ENCODE measurements at regions of chr16 and their contacts with region 1.

Region 1: GRCh38 chr16:17467923-17468540 is 2.7 kb downstream of the XYLT1 start:
- DNase-seq: peak; percentile 69
- ATAC-seq: peak; percentile 27; the same call in 1 of the 2 replicates
- H3K4me3 ChIP-seq: no peak overlapping the region
- H3K27ac ChIP-seq: no peak overlapping the region
- H3K4me1 ChIP-seq: peaks cover 13% of the 10 kb centered on the region
- H3K27me3 ChIP-seq: no peaks in the 10 kb centered on the region
- CTCF ChIP-seq: peak; percentile 69
- POLR2A ChIP-seq: no peak
- RAD21 ChIP-seq: peak; percentile 74

Region 2: GRCh38 chr16:16861546-16861945 is 606.5 kb before region 1 on chr16:
- CTCF ChIA-PET with region 1: interaction called, 5 read pairs
- POLR2A ChIA-PET with region 1: interaction called, 14 read pairs
- dilution Hi-C with region 1: no loop called
- in situ Hi-C with region 1: loop called (anchors 25 kb)
- intact Hi-C with region 1: loop called (anchors 1 kb)
- DNase-seq: peak; percentile 32
- ATAC-seq: peak; percentile 67
- H3K4me3 ChIP-seq: no peak overlapping the region
- H3K27ac ChIP-seq: no peak overlapping the region
- H3K4me1 ChIP-seq: no peaks in the 10 kb centered on the region
- H3K27me3 ChIP-seq: no peaks in the 10 kb centered on the region
- CTCF ChIP-seq: peak; percentile 67
- POLR2A ChIP-seq: no peak
- RAD21 ChIP-seq: peak; percentile 59

Region 3: DNA sequence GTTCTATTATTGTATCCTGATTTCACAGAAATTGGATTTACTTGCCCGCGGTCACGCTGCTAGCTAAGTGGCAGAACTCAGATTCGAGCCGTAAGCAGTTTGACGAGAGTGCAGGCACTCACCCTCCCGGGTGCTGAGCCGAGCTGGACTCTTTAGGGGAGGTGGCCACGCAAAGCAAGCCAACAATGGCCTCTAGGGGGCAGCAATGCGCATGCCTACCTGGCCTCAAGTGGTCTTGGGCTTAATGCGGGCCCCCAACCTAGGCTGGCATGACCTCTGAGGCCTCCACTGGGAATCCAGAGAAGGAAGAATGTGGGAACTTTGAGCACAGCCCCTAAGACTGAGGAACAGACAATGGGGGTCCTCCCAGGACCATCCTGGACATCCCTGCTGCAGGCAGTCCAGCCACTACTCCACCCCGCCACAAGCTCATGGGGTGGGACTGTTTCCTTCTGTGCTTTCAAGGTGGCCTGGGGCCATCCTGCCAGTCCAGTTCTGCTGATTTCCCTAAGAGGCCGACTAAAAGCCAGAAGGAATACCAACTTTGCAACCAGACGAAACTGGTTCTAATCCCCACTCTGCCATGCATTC is 273.7 kb before region 1 on chr16:
- CTCF ChIA-PET with region 1: no interaction called
- POLR2A ChIA-PET with region 1: no interaction called
- dilution Hi-C with region 1: no loop called
- in situ Hi-C with region 1: no loop called
- intact Hi-C with region 1: loop called (anchors 5 kb)
- DNase-seq: peak; percentile 16
- ATAC-seq: peak; percentile 61
- H3K4me3 ChIP-seq: no peak overlapping the region
- H3K27ac ChIP-seq: no peak overlapping the region
- H3K4me1 ChIP-seq: no peaks in the 10 kb centered on the region
- H3K27me3 ChIP-seq: no peaks in the 10 kb centered on the region
- CTCF ChIP-seq: peak; percentile 49
- POLR2A ChIP-seq: no peak
- RAD21 ChIP-seq: peak; percentile 49

Region 4: GRCh38 chr16:17224879-17225281 is 243.2 kb before region 1 on chr16:
- CTCF ChIA-PET with region 1: no interaction called
- POLR2A ChIA-PET with region 1: no interaction called
- dilution Hi-C with region 1: no loop called
- in situ Hi-C with region 1: loop called (anchors 25 kb)
- intact Hi-C with region 1: loop called (anchors 5 kb)
- DNase-seq: peak; percentile 82
- ATAC-seq: peak; percentile 83
- H3K4me3 ChIP-seq: no peak overlapping the region
- H3K27ac ChIP-seq: no peak overlapping the region
- H3K4me1 ChIP-seq: peaks cover 4% of the 10 kb centered on the region; the same call in 1 of the 2 replicates
- H3K27me3 ChIP-seq: no peaks in the 10 kb centered on the region
- CTCF ChIP-seq: no peak
- POLR2A ChIP-seq: no peak
- RAD21 ChIP-seq: no peak

Region 5: DNA sequence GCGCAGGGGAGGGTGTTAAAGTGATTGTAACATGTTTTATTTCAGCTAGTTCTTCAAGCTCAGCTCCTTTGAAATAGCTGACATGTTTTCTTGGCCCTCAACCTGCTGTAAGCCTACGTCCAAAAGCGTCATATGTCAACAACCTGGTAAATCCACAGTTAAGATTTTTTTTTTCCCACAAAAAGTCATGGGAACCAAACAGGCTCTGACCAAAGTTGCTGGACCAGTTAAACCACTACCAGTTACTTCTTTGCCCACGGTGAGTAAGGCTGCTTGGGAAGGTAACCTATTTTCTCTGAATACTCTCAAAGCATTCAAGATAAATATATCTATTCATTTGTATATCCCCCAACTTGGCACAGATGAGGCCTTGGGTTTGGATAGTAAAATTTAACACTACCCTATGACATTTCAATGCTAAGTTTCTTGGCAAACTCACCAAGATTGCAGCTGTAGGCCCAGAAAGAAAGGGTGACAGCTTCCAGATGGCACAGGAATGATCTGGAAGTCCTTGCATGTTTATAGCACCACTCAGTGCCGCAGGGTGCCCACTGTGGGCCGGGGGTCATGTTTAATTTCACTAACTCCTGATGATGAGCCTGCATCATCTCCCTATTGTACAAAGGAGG is 163.4 kb before region 1 on chr16:
- CTCF ChIA-PET with region 1: no interaction called
- POLR2A ChIA-PET with region 1: no interaction called
- dilution Hi-C with region 1: no loop called
- in situ Hi-C with region 1: no loop called
- intact Hi-C with region 1: loop called (anchors 1 kb)
- DNase-seq: peak; percentile 17
- ATAC-seq: peak; percentile 27
- H3K4me3 ChIP-seq: no peak overlapping the region
- H3K27ac ChIP-seq: no peak overlapping the region
- H3K4me1 ChIP-seq: no peaks in the 10 kb centered on the region
- H3K27me3 ChIP-seq: no peaks in the 10 kb centered on the region
- CTCF ChIP-seq: 0 out of 2 replicates have a peak, but pooled peaks have one; percentile 8
- POLR2A ChIP-seq: no peak
- RAD21 ChIP-seq: no peak

Measured in IMR-90 (cell line).